ENCODE measurements at regions of chr22 and their contacts with region 1.

Region 1: DNA sequence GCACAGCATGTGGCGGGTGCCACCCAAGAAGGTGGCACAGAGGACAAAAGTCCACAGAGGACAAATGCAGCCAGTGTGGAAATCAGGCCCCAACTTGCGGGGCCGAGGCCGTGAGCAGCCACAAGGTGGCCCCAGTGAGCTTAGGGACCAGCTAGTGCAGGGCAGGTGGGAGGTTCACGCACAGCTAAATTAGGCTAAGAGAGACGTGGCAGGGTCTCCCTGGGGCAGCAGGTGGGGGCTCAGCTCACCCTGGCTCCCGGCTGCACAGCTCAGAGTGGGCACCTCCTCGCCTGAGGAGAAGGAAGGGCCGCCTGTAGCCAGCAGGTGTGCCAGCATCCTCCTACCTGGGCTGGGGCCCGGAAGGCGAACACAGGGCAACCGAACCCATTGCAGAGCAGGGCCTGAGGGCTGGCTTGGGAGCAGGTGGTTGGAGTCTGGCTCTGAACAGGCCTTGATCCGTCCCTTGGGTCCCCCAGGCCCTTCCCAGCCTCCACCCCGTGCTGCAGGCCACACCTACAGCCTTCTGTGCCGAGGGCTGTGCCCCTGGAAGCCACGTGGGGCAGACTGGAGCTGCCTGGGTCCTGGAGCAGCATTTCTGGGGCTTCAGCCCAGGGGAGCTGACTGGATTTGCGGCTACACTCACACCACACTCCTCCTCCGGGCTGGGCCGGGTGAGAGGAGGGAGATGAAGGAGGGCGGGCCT is 26.1 kb upstream of the CELSR1 start:
- DNase-seq: peak; percentile 66
- H3K4me3 Mint-ChIP-seq: peak overlapping the region; percentile 35
- H3K27ac Mint-ChIP-seq: no peak overlapping the region
- H3K4me1 Mint-ChIP-seq: peaks cover 14% of the 10 kb centered on the region
- H3K27me3 Mint-ChIP-seq: no peaks in the 10 kb centered on the region
- CTCF ChIP-seq: peak; percentile 87

Region 2: GRCh38 chr22:46367707-46368191 is 195.8 kb before region 1 on chr22:
- CTCF ChIA-PET with region 1: interaction called, 10 read pairs
- POLR2A ChIA-PET with region 1: no interaction called
- intact Hi-C with region 1: no loop called
- DNase-seq: peak; percentile 64
- H3K4me3 Mint-ChIP-seq: no peak overlapping the region
- H3K27ac Mint-ChIP-seq: no peak overlapping the region
- H3K4me1 Mint-ChIP-seq: peaks cover 6% of the 10 kb centered on the region
- H3K27me3 Mint-ChIP-seq: no peaks in the 10 kb centered on the region
- CTCF ChIP-seq: peak; percentile 93

Region 3: DNA sequence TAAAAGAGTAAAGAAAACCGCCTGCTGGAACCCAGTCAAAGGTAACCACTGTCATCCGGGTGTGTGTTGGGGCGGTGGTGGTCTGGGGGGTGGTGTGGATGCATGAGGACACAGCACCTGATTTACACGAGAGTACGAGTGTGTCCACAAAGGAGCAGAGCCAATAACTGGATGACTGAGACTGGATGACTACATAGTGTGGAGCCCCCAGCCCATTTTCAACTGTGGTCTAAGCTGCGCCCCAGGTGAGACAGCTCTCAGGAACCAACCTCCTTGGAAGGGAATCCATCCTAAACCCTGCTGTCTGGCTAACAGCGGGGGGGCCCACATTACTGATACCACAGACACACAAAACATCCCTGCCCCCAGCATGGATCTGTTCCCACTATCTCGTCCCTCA is 31.8 kb before region 1 on chr22:
- CTCF ChIA-PET with region 1: no interaction called
- POLR2A ChIA-PET with region 1: no interaction called
- intact Hi-C with region 1: no loop called
- DNase-seq: no peak
- H3K4me3 Mint-ChIP-seq: peak overlapping the region; percentile 69
- H3K27ac Mint-ChIP-seq: no peak overlapping the region
- H3K4me1 Mint-ChIP-seq: peaks cover 43% of the 10 kb centered on the region
- H3K27me3 Mint-ChIP-seq: no peaks in the 10 kb centered on the region
- CTCF ChIP-seq: no peak

Region 4: DNA sequence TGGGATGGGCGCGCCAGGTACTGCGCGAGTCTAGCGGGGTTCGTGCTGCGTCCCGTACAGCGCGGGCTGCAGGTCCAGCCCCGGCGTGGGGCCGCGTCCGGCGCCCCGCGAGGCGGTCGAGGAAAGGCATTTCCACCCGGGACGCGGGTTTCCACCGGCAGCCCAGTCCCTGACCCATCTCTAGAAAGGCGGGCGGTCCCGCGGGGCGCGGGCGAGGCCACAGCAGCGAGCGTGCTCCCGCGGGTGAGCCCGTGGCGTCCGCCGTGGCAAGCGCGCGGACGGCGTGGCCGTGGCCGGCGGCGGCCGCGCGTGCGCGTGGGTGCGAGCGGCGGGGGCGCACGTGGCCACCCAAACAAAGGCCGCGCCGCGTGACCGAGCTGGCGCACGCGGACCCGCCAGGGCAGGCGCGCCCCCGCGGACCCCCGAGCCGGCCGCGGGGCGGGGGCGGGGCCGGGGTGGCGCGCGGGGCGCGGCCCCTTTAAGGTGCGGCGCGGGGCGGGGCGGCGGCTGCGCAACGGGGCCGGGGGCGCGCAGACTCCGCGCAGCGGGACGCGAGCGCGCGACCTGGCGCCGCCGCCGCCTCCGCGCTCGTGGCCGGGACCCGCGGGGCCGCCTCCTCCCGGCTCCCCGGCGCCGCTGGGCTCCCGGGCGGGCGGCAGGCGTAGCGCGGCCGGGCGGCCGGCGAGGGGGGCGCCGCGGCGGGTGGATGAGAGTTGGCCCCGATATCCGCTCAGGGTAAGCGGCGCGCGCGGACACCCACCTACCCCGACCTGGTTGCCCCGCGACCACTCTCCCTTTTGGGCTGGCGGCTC is 13.2 kb after region 1 on chr22:
- CTCF ChIA-PET with region 1: interaction called, 20 read pairs
- POLR2A ChIA-PET with region 1: interaction called, 4 read pairs
- intact Hi-C with region 1: no loop called
- DNase-seq: peak; percentile 30
- H3K4me3 Mint-ChIP-seq: peak overlapping the region; percentile 67
- H3K27ac Mint-ChIP-seq: peak overlapping the region; percentile 21
- H3K4me1 Mint-ChIP-seq: peaks cover 34% of the 10 kb centered on the region
- H3K27me3 Mint-ChIP-seq: no peaks in the 10 kb centered on the region
- CTCF ChIP-seq: no peak

Region 5: GRCh38 chr22:46661221-46661851 is 97.8 kb after region 1 on chr22:
- CTCF ChIA-PET with region 1: interaction called, 6 read pairs
- POLR2A ChIA-PET with region 1: no interaction called
- intact Hi-C with region 1: loop called (anchors 5 kb)
- DNase-seq: peak; percentile 91
- H3K4me3 Mint-ChIP-seq: no peak overlapping the region
- H3K27ac Mint-ChIP-seq: peak overlapping the region; percentile 61
- H3K4me1 Mint-ChIP-seq: peaks cover 22% of the 10 kb centered on the region
- H3K27me3 Mint-ChIP-seq: no peaks in the 10 kb centered on the region
- CTCF ChIP-seq: no peak

Region 6: GRCh38 chr22:46737976-46738646 is 174.6 kb after region 1 on chr22 and contains the start of gene CERK:
- CTCF ChIA-PET with region 1: interaction called, 3 read pairs
- POLR2A ChIA-PET with region 1: no interaction called
- intact Hi-C with region 1: loop called (anchors 10 kb)
- DNase-seq: peak; percentile 52
- H3K4me3 Mint-ChIP-seq: peak within 1 kb of the TSS; percentile 80
- H3K27ac Mint-ChIP-seq: no peak within 1 kb of the TSS
- H3K4me1 Mint-ChIP-seq: peaks cover 10% of the 10 kb centered on the region
- H3K27me3 Mint-ChIP-seq: no peaks in the 10 kb centered on the region
- CTCF ChIP-seq: no peak
- total RNA-seq, gene CERK: 11.6 and 20.2 TPM in 2 replicates